ENCODE measurements at regions of chr6 and their contacts with region 1.

Region 1: DNA sequence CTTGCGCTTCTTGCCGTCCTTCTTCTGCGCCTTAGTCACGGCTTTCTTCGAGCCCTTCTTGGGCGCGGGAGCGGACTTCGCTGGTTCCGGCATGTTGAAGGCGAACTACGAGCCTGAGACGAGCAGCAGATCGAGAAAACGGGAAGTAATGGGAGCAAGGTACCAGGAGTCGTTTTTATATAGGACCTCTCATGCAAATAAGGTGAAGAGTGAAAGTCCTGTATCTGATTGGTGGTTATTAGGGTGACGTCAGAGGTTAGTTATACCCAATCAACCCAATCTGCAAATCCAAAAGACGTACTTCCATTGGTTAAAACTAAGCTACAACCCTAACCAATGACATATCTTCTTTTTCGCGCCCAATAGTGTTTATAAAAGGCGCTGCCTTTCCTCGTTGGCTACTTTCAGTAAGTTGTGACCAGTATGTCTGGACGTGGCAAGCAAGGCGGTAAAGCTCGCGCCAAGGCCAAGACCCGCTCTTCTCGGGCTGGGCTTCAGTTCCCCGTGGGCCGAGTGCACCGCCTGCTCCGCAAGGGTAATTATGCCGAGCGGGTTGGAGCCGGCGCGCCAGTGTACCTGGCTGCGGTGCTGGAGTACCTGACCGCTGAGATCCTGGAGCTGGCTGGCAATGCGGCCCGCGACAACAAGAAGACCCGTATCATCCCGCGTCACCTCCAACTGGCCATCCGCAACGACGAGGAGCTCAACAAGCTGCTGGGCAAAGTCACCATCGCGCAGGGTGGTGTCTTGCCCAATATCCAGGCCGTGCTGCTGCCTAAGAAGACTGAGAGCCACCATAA is 100.6 kb upstream of the PRSS16 start:
- DNase-seq: peak; percentile 85 to 96 (median 94)
- H3K4me3 ChIP-seq: peak overlapping the region; percentile 76 to 77
- H3K4me3 Mint-ChIP-seq: no peak overlapping the region
- H3K27ac ChIP-seq: peak overlapping the region; percentile 97
- H3K27ac Mint-ChIP-seq: no peak overlapping the region
- H3K4me1 ChIP-seq: peaks cover 22% of the 10 kb centered on the region
- H3K4me1 Mint-ChIP-seq: peaks cover 10 to 20% (median 13%) of the 10 kb centered on the region in 4 donors
- H3K27me3 ChIP-seq: no peaks in the 10 kb centered on the region
- H3K27me3 Mint-ChIP-seq: no peaks in the 10 kb centered on the region

Region 2: DNA sequence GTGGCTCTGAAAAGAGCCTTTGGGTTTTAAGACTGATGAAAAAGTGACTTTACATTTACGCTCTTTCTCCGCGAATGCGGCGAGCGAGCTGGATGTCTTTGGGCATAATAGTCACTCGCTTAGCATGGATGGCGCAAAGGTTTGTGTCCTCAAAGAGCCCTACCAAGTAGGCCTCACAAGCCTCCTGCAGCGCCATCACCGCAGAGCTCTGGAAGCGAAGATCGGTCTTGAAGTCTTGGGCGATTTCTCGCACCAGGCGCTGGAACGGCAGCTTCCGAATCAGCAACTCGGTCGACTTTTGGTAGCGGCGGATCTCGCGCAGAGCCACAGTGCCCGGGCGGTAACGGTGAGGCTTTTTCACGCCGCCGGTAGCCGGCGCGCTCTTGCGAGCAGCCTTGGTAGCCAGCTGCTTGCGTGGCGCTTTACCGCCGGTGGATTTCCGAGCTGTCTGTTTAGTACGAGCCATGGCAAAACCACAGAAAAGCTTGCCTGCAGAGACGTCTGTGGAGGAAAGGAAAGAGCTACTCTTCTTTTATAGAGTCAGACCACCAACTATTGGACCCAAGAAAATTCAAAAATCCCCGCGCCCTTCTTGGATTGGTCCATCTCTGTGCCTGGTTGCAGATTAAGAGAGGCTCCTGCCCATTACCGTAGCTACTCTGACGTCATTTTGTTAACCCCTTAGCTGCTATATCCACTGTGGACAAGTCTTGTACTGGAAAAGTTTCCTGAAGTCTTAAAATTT is 1115.1 kb before region 1 on chr6:
- CTCF ChIA-PET with region 1: no interaction called
- POLR2A ChIA-PET with region 1: interaction called, 37 read pairs
- intact Hi-C with region 1: no loop called
- DNase-seq: peak; percentile 86 to 94 (median 89)
- H3K4me3 ChIP-seq: peak overlapping the region; percentile 53 to 67
- H3K4me3 Mint-ChIP-seq: peak overlapping the region; percentile 91 to 99 (median 94)
- H3K27ac ChIP-seq: peak overlapping the region; percentile 71
- H3K27ac Mint-ChIP-seq: peak overlapping the region; percentile 89 to 98 (median 96)
- H3K4me1 ChIP-seq: peaks cover 35% of the 10 kb centered on the region
- H3K4me1 Mint-ChIP-seq: peaks cover 33 to 54% (median 44%) of the 10 kb centered on the region in 4 donors
- H3K27me3 ChIP-seq: no peaks in the 10 kb centered on the region
- H3K27me3 Mint-ChIP-seq: peaks cover 0 to 3% of the 10 kb centered on the region in 2 donors

Region 3: DNA sequence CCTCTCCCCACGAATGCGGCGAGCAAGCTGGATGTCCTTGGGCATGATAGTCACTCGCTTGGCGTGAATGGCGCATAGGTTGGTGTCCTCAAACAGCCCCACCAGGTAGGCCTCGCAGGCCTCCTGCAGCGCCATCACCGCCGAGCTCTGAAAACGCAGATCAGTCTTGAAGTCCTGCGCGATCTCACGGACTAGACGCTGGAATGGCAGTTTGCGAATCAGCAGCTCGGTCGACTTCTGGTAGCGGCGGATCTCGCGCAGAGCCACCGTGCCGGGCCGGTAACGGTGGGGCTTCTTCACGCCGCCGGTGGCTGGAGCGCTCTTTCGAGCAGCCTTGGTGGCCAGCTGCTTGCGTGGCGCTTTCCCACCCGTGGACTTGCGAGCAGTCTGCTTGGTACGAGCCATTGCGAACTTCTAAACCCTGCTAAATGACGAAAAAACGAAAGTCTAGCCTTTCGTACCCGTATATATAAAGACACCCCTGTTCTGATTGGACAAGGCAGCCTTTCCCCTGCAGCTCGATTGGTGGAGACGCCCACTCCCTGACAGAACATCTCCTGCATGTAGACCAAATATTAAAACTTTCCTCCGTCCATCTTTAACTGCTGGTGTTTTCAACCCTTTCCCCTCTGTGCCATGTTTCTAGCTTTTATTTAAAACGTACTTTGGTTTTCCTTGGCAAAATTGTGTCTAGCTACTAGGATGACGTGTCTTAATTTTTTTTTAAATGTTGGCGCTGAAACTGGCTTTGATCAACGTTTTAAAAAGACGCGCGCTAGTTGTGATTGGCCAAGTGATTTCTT is 949.9 kb before region 1 on chr6:
- CTCF ChIA-PET with region 1: no interaction called
- POLR2A ChIA-PET with region 1: interaction called, 77 read pairs
- intact Hi-C with region 1: no loop called
- DNase-seq: peak; percentile 92 to 93 (median 92)
- H3K4me3 ChIP-seq: peak overlapping the region; percentile 83 to 97
- H3K4me3 Mint-ChIP-seq: peak overlapping the region; percentile 94 to 99 (median 97)
- H3K27ac ChIP-seq: peak overlapping the region; percentile 84
- H3K27ac Mint-ChIP-seq: peak overlapping the region; percentile 96 to 100 (median 98)
- H3K4me1 ChIP-seq: peaks cover 43% of the 10 kb centered on the region
- H3K4me1 Mint-ChIP-seq: peaks cover 23 to 57% (median 41%) of the 10 kb centered on the region in 4 donors
- H3K27me3 ChIP-seq: no peaks in the 10 kb centered on the region
- H3K27me3 Mint-ChIP-seq: no peaks in the 10 kb centered on the region

Region 4: DNA sequence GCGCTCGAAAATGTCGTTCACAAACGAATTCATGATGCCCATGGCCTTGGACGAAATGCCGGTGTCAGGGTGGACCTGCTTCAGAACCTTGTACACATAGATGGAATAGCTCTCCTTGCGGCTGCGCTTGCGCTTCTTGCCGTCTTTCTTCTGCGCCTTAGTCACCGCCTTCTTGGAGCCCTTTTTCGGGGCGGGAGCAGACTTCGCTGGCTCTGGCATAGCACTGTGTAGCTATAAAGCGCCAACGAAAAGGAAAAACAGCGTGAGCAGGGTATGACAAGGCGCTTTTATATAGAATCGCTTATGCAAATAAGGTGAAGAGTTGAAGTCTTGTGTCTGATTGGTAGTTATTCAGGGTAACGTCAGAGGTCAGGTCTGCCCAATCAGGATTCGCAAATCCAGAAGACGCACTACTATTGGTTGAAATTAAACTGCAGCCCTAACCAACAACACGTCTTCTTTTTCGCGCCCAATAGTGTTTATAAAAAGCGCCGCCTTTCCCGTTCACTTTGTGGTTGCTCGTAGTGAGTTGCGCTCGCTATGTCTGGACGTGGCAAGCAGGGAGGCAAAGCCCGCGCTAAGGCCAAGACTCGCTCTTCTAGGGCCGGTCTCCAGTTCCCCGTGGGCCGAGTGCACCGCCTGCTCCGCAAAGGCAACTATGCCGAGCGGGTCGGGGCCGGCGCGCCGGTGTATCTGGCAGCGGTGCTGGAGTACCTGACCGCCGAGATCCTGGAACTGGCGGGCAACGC is 14.2 kb before region 1 on chr6:
- CTCF ChIA-PET with region 1: interaction called, 64 read pairs
- POLR2A ChIA-PET with region 1: interaction called, 863 read pairs
- intact Hi-C with region 1: loop called (anchors 1 kb)
- DNase-seq: peak; percentile 96 to 99 (median 98)
- H3K4me3 ChIP-seq: peak overlapping the region; percentile 72 to 90
- H3K4me3 Mint-ChIP-seq: no peak overlapping the region
- H3K27ac ChIP-seq: peak overlapping the region; percentile 93
- H3K27ac Mint-ChIP-seq: no peak overlapping the region
- H3K4me1 ChIP-seq: peaks cover 27% of the 10 kb centered on the region
- H3K4me1 Mint-ChIP-seq: peaks cover 0 to 24% (median 10%) of the 10 kb centered on the region in 4 donors
- H3K27me3 ChIP-seq: no peaks in the 10 kb centered on the region
- H3K27me3 Mint-ChIP-seq: no peaks in the 10 kb centered on the region

Region 5: GRCh38 chr6:27479319-27480182 is 332.6 kb after region 1 on chr6:
- CTCF ChIA-PET with region 1: interaction called, 3 read pairs
- POLR2A ChIA-PET with region 1: interaction called, 22 read pairs
- intact Hi-C with region 1: loop called (anchors 1 kb)
- DNase-seq: peak; percentile 87 to 93 (median 92)
- H3K4me3 ChIP-seq: peak overlapping the region; percentile 88 to 93
- H3K4me3 Mint-ChIP-seq: no peak overlapping the region
- H3K27ac ChIP-seq: peak overlapping the region; percentile 85
- H3K27ac Mint-ChIP-seq: no peak overlapping the region
- H3K4me1 ChIP-seq: peaks cover 17% of the 10 kb centered on the region
- H3K4me1 Mint-ChIP-seq: peaks cover 0 to 11% (median 5%) of the 10 kb centered on the region in 4 donors
- H3K27me3 ChIP-seq: no peaks in the 10 kb centered on the region
- H3K27me3 Mint-ChIP-seq: no peaks in the 10 kb centered on the region

Region 6: DNA sequence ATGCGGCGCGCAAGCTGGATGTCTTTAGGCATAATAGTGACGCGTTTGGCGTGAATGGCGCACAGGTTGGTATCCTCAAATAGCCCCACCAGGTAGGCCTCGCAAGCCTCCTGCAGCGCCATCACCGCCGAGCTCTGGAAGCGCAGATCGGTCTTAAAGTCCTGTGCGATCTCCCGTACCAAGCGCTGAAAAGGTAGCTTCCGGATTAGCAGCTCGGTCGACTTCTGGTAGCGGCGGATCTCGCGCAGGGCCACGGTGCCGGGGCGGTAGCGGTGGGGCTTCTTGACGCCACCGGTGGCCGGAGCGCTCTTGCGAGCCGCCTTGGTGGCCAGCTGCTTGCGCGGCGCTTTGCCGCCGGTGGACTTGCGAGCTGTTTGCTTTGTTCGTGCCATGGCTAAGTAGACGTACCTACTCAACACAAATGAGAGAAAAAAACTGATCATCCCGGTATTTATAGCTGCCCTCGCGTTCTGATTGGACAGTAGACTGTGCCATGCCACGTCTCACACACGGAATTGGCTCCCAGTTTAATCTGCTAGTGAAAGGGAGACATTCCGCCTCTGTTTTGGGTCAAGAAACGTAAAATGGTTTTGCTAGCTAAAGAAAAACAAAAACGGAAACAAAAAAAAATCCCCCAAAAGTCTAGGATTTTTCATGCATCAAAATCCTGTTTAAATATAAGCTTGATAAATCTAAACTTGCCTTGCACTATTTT is 725.2 kb after region 1 on chr6:
- CTCF ChIA-PET with region 1: interaction called, 6 read pairs
- POLR2A ChIA-PET with region 1: interaction called, 84 read pairs
- intact Hi-C with region 1: loop called (anchors 1 kb)
- DNase-seq: peak; percentile 91 to 96 (median 94)
- H3K4me3 ChIP-seq: peak overlapping the region; percentile 77 to 89
- H3K4me3 Mint-ChIP-seq: peak overlapping the region; percentile 87 to 94 (median 90)
- H3K27ac ChIP-seq: peak overlapping the region; percentile 86
- H3K27ac Mint-ChIP-seq: peak overlapping the region; percentile 89 to 97 (median 94)
- H3K4me1 ChIP-seq: peaks cover 33% of the 10 kb centered on the region
- H3K4me1 Mint-ChIP-seq: peaks cover 24 to 48% (median 33%) of the 10 kb centered on the region in 4 donors
- H3K27me3 ChIP-seq: no peaks in the 10 kb centered on the region
- H3K27me3 Mint-ChIP-seq: no peaks in the 10 kb centered on the region